Calu3 (cell line): ENCODE measurements at regions of chr16 and their contacts with region 1.

Region 1: DNA sequence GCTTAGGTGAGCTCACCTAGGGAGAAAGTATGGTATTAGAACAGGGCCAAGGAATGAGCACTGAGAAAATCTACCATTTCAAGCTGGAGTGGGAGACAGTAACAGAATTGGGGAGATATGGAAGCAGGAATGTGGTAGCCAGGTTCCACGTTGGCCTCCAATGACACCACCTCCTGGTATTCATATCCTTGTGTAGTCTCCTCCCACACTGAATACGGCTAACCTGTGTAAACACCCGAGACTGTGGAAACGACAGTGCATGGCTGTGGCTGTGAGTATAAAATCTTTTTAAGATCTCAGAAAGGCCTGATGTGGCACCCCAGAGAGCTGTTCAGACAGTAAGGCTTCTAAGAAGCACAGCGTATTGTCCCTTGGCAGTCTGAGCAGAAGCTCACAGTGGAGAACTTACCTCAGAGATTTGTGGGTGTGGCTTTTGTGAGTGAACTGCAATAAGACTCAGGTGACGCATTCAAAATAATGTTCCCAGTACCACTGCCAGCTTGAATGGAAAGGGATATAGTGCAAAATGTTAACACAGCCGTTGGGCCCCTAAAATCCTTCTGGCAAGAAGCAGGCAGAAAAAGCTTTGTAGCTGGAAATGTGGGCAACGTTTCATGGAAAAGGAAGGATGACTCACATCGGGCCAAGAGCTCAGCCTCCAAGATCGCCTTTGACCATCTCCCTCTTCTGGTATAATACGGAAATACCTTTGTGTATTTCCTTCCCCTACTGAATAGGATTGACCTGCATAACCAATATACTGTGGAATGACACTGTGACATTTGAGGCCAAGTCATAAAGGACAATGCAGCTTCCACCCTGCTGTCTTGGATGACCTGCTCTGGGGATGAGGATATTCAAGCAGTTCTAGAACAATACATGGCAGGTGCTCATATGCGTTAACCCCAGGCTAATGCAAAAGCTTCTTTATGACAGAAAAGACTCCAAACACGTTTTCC is 14.3 kb downstream of the SDR42E1 start:
- DNase-seq: peak; percentile 49
- H3K4me3 Mint-ChIP-seq: peak overlapping the region; percentile 1
- H3K27ac Mint-ChIP-seq: peak overlapping the region; percentile 58
- H3K4me1 Mint-ChIP-seq: peaks cover 36% of the 10 kb centered on the region
- H3K27me3 Mint-ChIP-seq: no peaks in the 10 kb centered on the region
- CTCF ChIP-seq: peak; percentile 72

Region 2: GRCh38 chr16:81885976-81886586 is 110.9 kb before region 1 on chr16:
- CTCF ChIA-PET with region 1: interaction called, 7 read pairs
- intact Hi-C with region 1: loop called (anchors 1 kb)
- DNase-seq: peak; percentile 75
- H3K4me3 Mint-ChIP-seq: no peak overlapping the region
- H3K27ac Mint-ChIP-seq: no peak overlapping the region
- H3K4me1 Mint-ChIP-seq: no peaks in the 10 kb centered on the region
- H3K27me3 Mint-ChIP-seq: peaks cover 72% of the 10 kb centered on the region
- CTCF ChIP-seq: peak; percentile 79

Region 3: GRCh38 chr16:82016263-82016662 is 19.3 kb after region 1 on chr16:
- CTCF ChIA-PET with region 1: interaction called, 11 read pairs
- intact Hi-C with region 1: no loop called
- DNase-seq: peak; percentile 71
- H3K4me3 Mint-ChIP-seq: peak overlapping the region; percentile 48
- H3K27ac Mint-ChIP-seq: peak overlapping the region; percentile 55
- H3K4me1 Mint-ChIP-seq: peaks cover 27% of the 10 kb centered on the region
- H3K27me3 Mint-ChIP-seq: peaks cover 20% of the 10 kb centered on the region
- CTCF ChIP-seq: peak; percentile 70

Region 4: DNA sequence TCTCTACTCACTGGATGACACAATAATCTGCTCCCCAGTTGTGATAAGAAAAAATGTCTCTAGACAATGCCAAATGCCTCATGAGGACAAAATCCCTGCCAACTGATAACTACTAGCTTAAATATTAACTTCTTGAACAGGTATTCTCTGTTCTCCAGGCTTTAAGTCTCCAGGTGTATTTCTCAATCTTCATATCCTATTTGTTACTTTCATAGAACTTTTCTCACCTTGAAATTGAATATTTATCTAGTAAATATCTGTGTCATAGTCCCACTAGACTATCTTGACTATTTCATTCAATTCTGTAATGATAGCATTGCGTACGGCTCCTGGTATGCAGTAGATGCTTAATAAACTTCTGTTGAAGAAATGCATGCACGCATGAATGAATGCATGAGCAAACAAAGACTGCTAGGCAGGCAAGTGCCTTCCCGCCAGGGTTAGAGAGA is 54.0 kb after region 1 on chr16:
- CTCF ChIA-PET with region 1: interaction called, 6 read pairs
- intact Hi-C with region 1: loop called (anchors 5 kb)
- DNase-seq: no peak
- H3K4me3 Mint-ChIP-seq: peak overlapping the region; percentile 3
- H3K27ac Mint-ChIP-seq: peak overlapping the region; percentile 32
- H3K4me1 Mint-ChIP-seq: peaks cover 38% of the 10 kb centered on the region
- H3K27me3 Mint-ChIP-seq: no peaks in the 10 kb centered on the region
- CTCF ChIP-seq: no peak

Region 5: DNA sequence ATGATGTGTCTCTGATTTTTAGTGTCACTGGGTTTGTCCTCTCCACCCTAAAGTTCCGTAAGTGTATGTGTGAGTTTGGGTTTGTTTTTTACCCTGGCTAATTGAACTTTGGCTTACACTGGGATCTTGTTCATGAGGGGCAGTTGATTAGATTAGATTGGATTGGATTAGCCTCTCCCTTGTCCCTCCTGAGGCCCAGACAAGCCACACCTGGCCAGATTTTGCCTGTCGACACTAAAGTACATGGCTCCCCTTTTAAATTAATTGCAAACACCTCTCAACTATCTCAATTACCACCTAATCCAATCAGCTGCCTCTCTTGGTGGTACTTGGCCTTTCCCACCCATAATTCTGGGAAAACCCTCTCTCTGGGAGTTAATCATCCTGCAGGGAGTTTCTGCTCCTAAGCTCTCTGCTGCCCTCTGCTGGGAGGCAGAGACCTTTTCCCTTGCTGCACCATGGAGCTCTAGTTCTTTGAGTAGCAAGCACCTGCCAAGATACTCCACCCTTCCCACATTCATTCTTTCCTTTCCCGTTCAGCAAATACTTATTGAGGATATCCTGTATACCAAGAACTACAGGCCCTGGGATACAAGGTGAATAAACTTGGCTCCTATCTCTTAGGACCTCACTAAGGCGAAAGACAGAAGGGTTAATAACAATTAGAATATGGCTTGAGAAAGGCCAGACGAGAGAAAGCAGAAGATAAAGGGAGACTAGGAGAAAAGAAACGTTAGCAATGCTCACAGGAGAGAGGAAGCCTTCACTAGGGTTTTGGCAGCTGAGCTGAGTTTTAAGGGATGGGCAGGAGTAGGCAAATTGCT is 233.1 kb after region 1 on chr16:
- CTCF ChIA-PET with region 1: interaction called, 17 read pairs
- intact Hi-C with region 1: no loop called
- DNase-seq: peak; percentile 90
- H3K4me3 Mint-ChIP-seq: no peak overlapping the region
- H3K27ac Mint-ChIP-seq: no peak overlapping the region
- H3K4me1 Mint-ChIP-seq: peaks cover 6% of the 10 kb centered on the region
- H3K27me3 Mint-ChIP-seq: peaks cover 68% of the 10 kb centered on the region
- CTCF ChIP-seq: peak; percentile 96

Region 6: DNA sequence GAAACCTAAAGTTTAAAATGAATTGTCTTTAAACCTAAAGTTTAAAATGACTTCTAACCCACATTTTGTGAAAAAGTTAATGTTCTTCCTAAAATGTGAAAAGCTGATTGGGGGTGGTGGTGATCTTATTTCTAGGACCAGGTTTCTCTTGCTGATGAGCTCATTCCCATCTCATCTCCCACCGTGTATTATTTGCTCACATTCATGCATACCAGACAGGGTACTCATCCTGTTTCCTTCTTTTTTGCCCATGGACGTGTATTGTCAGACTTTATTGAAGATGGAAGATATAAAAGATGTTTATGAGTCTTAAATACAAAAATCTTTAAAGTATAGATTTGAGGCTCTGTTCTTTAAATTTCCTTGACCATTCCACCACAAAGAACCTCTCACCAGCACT is 243.2 kb after region 1 on chr16:
- CTCF ChIA-PET with region 1: no interaction called
- intact Hi-C with region 1: no loop called
- DNase-seq: no peak
- H3K4me3 Mint-ChIP-seq: no peak overlapping the region
- H3K27ac Mint-ChIP-seq: no peak overlapping the region
- H3K4me1 Mint-ChIP-seq: no peaks in the 10 kb centered on the region
- H3K27me3 Mint-ChIP-seq: peaks cover 87% of the 10 kb centered on the region
- CTCF ChIP-seq: no peak